Dorsolateral prefrontal cortex (tissue), 120 donors: ENCODE measurements at regions of chr3 and their contacts with region 1.

Region 1: DNA sequence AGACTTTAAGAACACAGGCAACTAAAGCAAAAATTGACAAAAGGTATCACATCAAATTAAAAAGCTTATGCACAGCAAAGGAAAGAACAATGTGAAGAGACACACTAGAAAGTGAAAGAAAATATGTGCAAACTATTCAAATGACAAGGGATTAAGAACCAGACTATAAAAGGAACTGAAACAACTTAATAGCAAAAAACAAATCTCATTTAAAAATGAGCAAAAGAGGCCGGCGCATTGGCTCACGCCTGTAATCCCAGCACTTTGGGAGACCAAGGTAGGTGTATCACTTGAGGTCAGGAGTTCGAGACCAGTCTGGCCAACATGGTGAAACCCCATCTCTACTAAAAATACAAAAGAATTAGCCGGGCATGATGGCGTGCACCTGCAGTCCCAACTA is 14.4 kb downstream of the NGLY1 start:
- DNase-seq: no peak
- H3K4me3 ChIP-seq: no peak overlapping the region
- H3K27ac ChIP-seq: no peak overlapping the region
- H3K27me3 ChIP-seq: no peaks in the 10 kb centered on the region
- CTCF ChIP-seq: no peak

Region 2: DNA sequence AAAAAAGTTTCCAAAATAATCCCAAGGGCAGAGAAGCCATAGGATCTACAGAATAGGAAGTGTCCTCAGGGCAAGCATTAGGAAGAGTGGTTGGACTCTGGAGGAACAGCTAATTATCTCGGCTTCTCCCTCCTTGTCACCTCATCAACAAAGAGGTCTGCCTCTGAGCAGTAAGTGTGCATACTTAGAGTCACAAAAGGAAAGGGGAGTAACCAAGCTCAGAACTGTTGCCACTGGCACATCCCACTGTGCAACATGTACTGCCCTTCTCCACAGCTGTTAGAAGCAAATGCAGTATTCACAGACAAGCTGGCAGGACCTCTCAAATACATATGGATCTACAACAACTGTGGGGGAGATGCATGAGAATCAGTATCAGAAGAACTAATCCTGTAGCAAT is 17.1 kb before region 1 on chr3:
- intact Hi-C with region 1: loop called in 1 of 2 experiments (anchors 1 kb)
- DNase-seq: no peak
- H3K4me3 ChIP-seq: no peak overlapping the region
- H3K27ac ChIP-seq: no peak overlapping the region
- H3K27me3 ChIP-seq: no peaks in the 10 kb centered on the region
- CTCF ChIP-seq: no peak